Heart left ventricle (tissue), 16 donors: ENCODE measurements at regions of chr3 and their contacts with region 1.

Region 1: GRCh38 chr3:184135149-184135910 is at the start of gene EIF2B5:
- DNase-seq: peak; percentile 93 to 96 (median 95)
- ATAC-seq: peak; percentile 95 to 97 (median 96)
- H3K4me3 ChIP-seq: peak within 1 kb of the TSS; percentile 71 to 99 (median 90)
- H3K27ac ChIP-seq: peak within 1 kb of the TSS; percentile 76 to 95 (median 91)
- H3K4me1 ChIP-seq: peaks cover 0 to 28% (median 18%) of the 10 kb centered on the region in 12 donors
- H3K27me3 ChIP-seq: no peaks in the 10 kb centered on the region
- CTCF ChIP-seq: peak; percentile 14 to 77 (median 44)
- POLR2A ChIP-seq: peak in 1 of 2 donors; percentile 58
- total RNA-seq, gene EIF2B5: 24.5 to 39.0 (median 30.9) TPM

Region 2: DNA sequence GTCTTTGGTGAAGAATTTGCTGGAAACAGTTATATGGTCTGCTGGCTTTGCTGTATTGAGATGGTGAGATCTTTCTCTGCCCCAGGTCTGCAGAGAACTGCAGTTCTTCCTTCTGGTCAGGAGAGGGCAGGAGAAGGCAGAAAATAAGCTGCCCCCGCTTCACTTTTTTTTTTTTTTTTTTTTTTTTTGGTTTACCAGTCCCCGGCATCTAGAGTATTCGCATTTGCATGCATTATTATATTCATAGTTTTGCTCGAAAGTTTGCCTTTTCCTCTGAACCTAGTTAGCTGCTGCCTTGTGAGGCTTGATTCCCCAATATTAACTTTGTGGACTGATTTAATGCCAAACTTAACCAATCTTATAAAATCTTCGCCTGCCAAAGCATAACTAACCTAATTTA is 240.0 kb before region 1 on chr3:
- intact Hi-C with region 1: loop called in 5 of 10 experiments (anchors 10 kb)
- DNase-seq: no peak
- ATAC-seq: peak in 3 of 4 donors; percentile 62 to 68 (median 64)
- H3K4me3 ChIP-seq: no peak overlapping the region
- H3K27ac ChIP-seq: no peak overlapping the region
- H3K4me1 ChIP-seq: no peaks in the 10 kb centered on the region
- H3K27me3 ChIP-seq: peaks cover 0 to 6% (median 0%) of the 10 kb centered on the region in 9 donors
- CTCF ChIP-seq: peak; percentile 64 to 83 (median 78)
- POLR2A ChIP-seq: no peak

Region 3: DNA sequence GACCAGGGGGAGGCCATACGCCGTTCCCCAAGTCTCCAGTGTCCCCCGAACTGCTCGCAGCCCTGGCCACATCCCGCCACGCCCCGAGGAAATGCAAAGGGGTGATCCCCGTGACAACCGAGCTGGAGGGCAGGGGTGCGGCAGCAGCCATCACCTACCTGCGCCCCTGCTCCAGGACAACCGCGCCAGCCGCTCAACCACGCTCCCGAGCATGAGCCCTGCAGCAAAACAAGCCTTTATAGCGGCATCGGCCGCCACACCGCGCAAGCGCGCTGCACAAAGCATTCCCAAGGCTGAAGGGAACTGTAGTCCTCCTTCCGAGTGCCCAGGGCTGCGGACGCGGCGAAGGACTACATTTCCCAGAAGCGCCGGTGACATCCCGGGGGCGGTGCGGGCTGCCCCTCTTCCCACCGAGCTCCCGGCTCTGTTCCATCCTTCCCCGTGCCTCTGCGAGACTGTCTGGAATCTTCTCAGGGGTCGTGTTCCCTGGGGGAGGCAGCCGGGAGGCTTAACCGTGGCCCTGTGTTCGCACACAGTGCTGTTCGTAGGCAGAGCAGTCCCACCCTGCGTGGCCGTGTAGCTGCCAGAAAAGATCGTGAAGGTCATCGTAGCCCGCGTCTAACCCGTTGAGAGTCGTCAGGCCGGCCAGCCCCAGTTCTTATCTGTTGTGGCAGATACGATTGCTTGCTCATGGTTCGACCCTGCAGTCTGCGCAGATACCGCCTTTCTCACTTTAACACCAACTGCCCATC is 117.5 kb before region 1 on chr3 and contains the start of gene ABCC5:
- intact Hi-C with region 1: loop called in 7 of 10 experiments (anchors 2 to 10 kb)
- DNase-seq: peak; percentile 94 to 97 (median 96)
- ATAC-seq: peak; percentile 96 to 98 (median 98)
- H3K4me3 ChIP-seq: peak within 1 kb of the TSS; percentile 59 to 99 (median 89)
- H3K27ac ChIP-seq: peak within 1 kb of the TSS; percentile 71 to 93 (median 84)
- H3K4me1 ChIP-seq: peaks cover 0 to 29% (median 15%) of the 10 kb centered on the region in 12 donors
- H3K27me3 ChIP-seq: no peaks in the 10 kb centered on the region
- CTCF ChIP-seq: peak in 9 of 12 donors; percentile 3 to 54 (median 41)
- POLR2A ChIP-seq: peak in 1 of 2 donors; percentile 67
- total RNA-seq, gene ABCC5: 20.8 to 61.7 (median 34.3) TPM

Region 4: DNA sequence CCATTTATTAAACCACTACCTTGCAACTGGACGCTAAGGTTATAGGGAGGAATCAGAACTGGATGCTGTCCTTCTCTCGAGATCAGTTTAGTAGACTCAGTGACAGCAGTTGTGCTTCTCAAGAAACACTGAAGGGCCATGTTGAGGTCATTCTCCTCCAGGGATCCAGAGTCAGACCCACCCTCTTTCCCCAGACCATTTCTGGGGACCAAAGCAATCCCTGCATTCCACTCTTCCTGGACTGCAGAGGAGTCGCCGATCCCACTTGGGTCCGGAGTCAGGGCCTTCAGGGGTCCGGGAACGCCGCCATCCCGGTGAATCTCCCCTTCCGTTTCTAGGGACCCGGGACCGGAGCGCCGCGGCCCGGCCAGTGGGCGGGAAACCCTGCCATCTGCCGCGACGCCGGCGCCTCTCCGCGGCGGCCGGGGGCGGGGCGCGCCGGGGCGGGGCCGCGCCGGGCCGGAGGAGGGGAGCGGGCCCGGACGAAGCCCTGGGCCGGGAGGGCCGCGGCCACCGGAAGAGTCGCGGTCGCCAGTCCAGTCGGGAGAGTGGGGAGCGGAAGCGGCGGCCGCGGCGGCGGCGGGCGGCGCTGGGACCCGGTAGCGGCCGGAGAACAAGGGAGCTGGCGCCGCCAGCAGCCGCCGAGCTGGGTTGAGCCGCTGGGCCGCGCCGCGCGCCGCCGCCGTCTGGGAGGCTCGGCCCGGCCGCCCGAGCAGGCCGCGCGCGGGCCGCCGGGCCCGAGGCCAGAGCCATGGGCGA is 19.7 kb after region 1 on chr3 and contains the start of gene DVL3:
- intact Hi-C with region 1: loop called in 2 of 10 experiments (anchors 2 kb)
- DNase-seq: peak; percentile 73 to 87 (median 82)
- ATAC-seq: peak; percentile 53 to 92 (median 82)
- H3K4me3 ChIP-seq: peak within 1 kb of the TSS; percentile 63 to 99 (median 90)
- H3K27ac ChIP-seq: peak within 1 kb of the TSS; percentile 73 to 98 (median 94)
- H3K4me1 ChIP-seq: peaks cover 2 to 55% (median 37%) of the 10 kb centered on the region in 12 donors
- H3K27me3 ChIP-seq: no peaks in the 10 kb centered on the region
- CTCF ChIP-seq: no peak
- POLR2A ChIP-seq: peak in 1 of 2 donors; percentile 49
- total RNA-seq, gene DVL3: 53.4 to 94.2 (median 70.9) TPM

Region 5: DNA sequence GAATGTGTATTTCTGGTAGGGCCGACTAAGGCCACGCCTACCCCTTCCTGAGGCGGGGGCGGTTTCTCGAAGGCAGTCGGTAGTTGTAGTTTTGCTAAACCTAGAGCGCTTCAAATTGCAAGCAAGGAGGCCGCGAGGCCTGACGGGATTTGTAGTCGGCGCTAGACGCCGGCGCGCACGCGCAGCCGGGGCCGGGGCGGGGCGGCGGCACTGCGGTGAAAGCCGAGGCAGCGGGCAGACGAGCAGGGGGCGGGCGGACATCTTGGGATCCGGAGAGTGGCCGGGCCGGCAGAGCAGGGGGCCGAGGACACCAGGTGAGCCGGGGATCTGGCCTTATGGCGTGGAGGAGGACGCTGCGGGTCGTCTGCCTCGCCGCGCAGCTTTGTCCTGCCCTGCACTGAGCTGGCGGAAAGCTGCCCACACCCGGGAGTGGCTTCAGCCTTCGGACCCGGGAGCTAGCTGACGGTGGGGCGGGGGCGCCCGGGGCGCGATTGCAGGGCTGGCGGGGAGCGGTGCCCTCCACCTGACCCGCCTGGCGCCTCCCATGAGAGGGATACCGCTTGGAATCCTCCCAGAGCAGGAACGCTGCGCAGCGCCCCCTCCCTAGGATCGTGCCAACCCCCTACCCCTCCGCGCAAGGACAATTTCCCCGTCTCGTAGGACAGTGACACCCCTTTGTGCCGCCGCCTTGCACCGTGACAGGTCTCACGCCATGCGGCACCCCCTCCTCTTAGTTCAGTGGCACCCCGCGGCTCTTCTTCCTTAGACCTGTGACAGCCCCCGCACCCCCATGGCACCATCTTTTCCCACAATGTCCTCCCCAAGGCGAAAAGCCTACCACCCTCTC is 39.5 kb after region 1 on chr3 and contains the start of gene AP2M1:
- intact Hi-C with region 1: loop called in 3 of 10 experiments (anchors 5 to 10 kb)
- DNase-seq: peak; percentile 98 to 99 (median 98)
- ATAC-seq: peak; percentile 91 to 97 (median 95)
- H3K4me3 ChIP-seq: peak within 1 kb of the TSS; percentile 64 to 100 (median 97)
- H3K27ac ChIP-seq: peak within 1 kb of the TSS; percentile 90 to 99 (median 96)
- H3K4me1 ChIP-seq: peaks cover 0 to 54% (median 33%) of the 10 kb centered on the region in 12 donors
- H3K27me3 ChIP-seq: no peaks in the 10 kb centered on the region
- CTCF ChIP-seq: peak in 1 of 12 donors; percentile 5
- POLR2A ChIP-seq: peak; percentile 40 to 93
- total RNA-seq, gene AP2M1: 225 to 400 (median 337) TPM

Region 6: GRCh38 chr3:184185461-184186308 is 50.4 kb after region 1 on chr3 and contains the start of gene ABCF3:
- intact Hi-C with region 1: loop called in 6 of 10 experiments (anchors 2 to 10 kb)
- DNase-seq: peak; percentile 99 to 100 (median 100)
- ATAC-seq: peak; percentile 98
- H3K4me3 ChIP-seq: peak within 1 kb of the TSS; percentile 55 to 99 (median 92)
- H3K27ac ChIP-seq: peak within 1 kb of the TSS; percentile 54 to 96 (median 92)
- H3K4me1 ChIP-seq: peaks cover 0 to 33% (median 24%) of the 10 kb centered on the region in 12 donors
- H3K27me3 ChIP-seq: no peaks in the 10 kb centered on the region
- CTCF ChIP-seq: no peak
- POLR2A ChIP-seq: peak in 1 of 2 donors; percentile 73
- total RNA-seq, gene ABCF3: 58.2 to 81.9 (median 69.2) TPM

Region 7: GRCh38 chr3:184362668-184363540 is 227.6 kb after region 1 on chr3:
- intact Hi-C with region 1: loop called in 1 of 10 experiments (anchors 5 kb)
- DNase-seq: peak; percentile 95 to 97 (median 97)
- ATAC-seq: peak; percentile 77 to 85 (median 79)
- H3K4me3 ChIP-seq: peak overlapping the region; percentile 63 to 100 (median 91)
- H3K27ac ChIP-seq: peak overlapping the region; percentile 97 to 100 (median 100)
- H3K4me1 ChIP-seq: peaks cover 0 to 31% (median 22%) of the 10 kb centered on the region in 12 donors
- H3K27me3 ChIP-seq: no peaks in the 10 kb centered on the region
- CTCF ChIP-seq: peak in 11 of 12 donors; percentile 35 to 80 (median 63)
- POLR2A ChIP-seq: peak in 1 of 2 donors; percentile 83